ENCODE measurements at regions of chr11 and their contacts with region 1.

Region 1: DNA sequence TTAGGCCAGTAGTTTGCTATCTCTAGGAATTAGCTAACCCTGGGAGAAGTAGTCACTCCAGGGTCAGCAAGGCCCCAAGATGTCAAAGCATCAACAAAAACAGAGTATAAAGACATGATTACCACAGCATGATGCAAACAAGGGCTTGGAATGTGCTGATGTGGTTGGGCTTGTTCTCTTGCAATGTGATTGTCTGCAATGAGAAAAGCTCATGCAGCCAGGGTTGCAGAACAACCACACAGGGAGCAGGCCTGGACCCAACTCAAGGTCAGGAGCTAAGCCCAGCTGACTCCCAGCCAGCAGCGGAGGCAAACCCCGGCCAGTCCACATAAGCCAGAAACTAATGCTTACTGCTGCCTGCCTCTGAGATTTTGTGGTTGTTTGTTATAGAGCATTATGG is 132.4 kb upstream of the ZC3H12C start:
- DNase-seq: peak; percentile 23 to 80 (median 79)
- ATAC-seq: peak; percentile 54 to 100 (median 74)
- H3K4me3 ChIP-seq: no peak overlapping the region
- H3K27ac ChIP-seq: no peak overlapping the region
- H3K4me1 ChIP-seq: no peaks in the 10 kb centered on the region
- H3K27me3 ChIP-seq: no peaks in the 10 kb centered on the region
- CTCF ChIP-seq: no peak
- POLR2A ChIP-seq: no peak

Region 2: GRCh38 chr11:110092515-110093404 is 131.9 kb after region 1 on chr11 and contains the start of gene ZC3H12C:
- intact Hi-C with region 1: no loop called
- DNase-seq: peak; percentile 87 to 89 (median 87)
- ATAC-seq: peak; percentile 75 to 88 (median 84)
- H3K4me3 ChIP-seq: peak within 1 kb of the TSS; percentile 47 to 70 (median 63)
- H3K27ac ChIP-seq: peak within 1 kb of the TSS; percentile 83 to 90 (median 88)
- H3K4me1 ChIP-seq: peaks cover 0 to 16% (median 0%) of the 10 kb centered on the region in 4 donors
- H3K27me3 ChIP-seq: no peaks in the 10 kb centered on the region
- CTCF ChIP-seq: peak in 3 of 4 donors; percentile 12 to 62 (median 33)
- POLR2A ChIP-seq: peak; percentile 62
- total RNA-seq, gene ZC3H12C: 4.0 to 7.9 (median 4.8) TPM

Region 3: DNA sequence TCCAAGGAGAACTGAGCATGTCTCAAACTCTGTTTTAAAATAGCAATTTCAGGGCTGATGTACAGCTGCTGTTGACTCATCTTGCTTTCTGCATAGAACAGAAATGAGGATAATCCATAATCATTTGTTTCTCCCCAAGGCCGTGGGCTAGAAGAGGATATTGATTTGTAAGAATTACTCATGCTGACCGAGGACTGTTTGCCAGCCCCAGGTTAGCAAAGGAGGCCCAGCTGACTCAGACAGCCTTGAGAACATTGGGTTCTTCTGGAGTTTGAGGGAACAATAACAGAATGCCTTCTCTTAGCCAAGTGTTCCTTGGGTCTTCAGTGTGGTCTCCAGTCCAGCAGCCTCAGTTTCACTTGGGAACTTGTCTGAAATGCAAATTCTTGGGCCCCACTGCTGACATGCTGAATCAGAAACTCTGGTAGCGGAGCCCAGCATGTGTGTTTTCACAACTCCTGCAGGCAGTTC is 224.3 kb after region 1 on chr11:
- intact Hi-C with region 1: loop called in 1 of 2 experiments (anchors 10 kb)
- DNase-seq: no peak
- ATAC-seq: peak in 1 of 4 donors; percentile 34
- H3K4me3 ChIP-seq: no peak overlapping the region
- H3K27ac ChIP-seq: no peak overlapping the region
- H3K4me1 ChIP-seq: no peaks in the 10 kb centered on the region
- H3K27me3 ChIP-seq: no peaks in the 10 kb centered on the region
- CTCF ChIP-seq: no peak
- POLR2A ChIP-seq: no peak